RWPE1 (cell line): ENCODE measurements at regions of chr9 and their contacts with region 1.

Region 1: GRCh38 chr9:14768405-14769229 is 46.1 kb upstream of the CER1 start:
- DNase-seq: peak; percentile 24
- H3K27ac ChIP-seq: no peak overlapping the region
- CTCF ChIP-seq: peak; percentile 75

Region 2: DNA sequence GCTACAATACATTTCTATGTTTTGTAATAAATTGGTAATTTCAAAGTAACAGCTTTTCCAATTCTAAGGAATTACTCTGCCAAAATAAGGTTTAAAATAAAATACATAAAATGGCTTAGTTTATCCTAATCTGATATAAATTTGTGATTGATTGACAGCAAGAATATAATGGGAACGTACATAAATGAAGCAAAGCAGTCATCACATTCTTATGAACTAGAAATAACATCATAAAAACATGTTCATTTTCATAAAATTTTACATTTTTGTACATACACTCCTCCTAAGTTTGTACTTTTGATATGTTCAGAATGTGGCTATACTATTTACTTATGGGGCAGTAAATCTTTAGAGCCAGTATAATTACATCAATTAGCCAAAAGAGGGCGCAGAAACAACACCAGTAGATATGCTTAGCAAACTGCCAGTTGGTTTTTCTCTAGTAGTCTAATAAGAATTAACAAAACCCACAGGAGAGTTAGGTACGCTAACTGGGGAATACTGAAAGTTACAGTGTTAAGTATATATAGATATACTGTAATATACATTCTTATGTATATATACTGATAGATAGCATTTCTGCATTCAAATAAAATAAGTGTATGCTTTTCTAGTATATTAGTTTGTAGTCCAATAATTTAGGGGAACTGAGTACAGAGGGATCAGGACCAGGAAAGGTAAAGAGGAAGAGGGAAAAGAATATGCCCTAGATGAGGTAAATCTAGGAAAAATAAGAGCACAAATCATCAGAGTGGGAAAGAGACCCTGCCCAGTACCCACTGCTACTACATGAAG is 152.2 kb before region 1 on chr9:
- CTCF ChIA-PET with region 1: interaction called, 11 read pairs
- POLR2A ChIA-PET with region 1: no interaction called
- DNase-seq: peak; percentile 11
- H3K27ac ChIP-seq: no peak overlapping the region
- CTCF ChIP-seq: peak; percentile 77